B cell (primary cell): ENCODE measurements at regions of chr1 and their contacts with region 1.

Region 1: GRCh38 chr1:248807067-248807737 is 18.5 kb downstream of the SH3BP5L start:
- DNase-seq: peak; percentile 77
- ATAC-seq: peak; percentile 56
- H3K4me3 ChIP-seq: no peak overlapping the region
- H3K4me3 Mint-ChIP-seq: peak overlapping the region; percentile 57
- H3K27ac ChIP-seq: no peak overlapping the region
- H3K27ac Mint-ChIP-seq: peak overlapping the region; percentile 99
- H3K4me1 ChIP-seq: peaks cover 47 to 54% of the 10 kb centered on the region in 2 donors
- H3K4me1 Mint-ChIP-seq: peaks cover 46% of the 10 kb centered on the region
- H3K27me3 ChIP-seq: no peaks in the 10 kb centered on the region
- H3K27me3 Mint-ChIP-seq: no peaks in the 10 kb centered on the region
- CTCF ChIP-seq: peak; percentile 92

Region 2: GRCh38 chr1:248404024-248404423 is 403.2 kb before region 1 on chr1:
- CTCF ChIA-PET with region 1: interaction called, 12 read pairs
- POLR2A ChIA-PET with region 1: no interaction called
- intact Hi-C with region 1: loop called (anchors 1 kb)
- DNase-seq: peak; percentile 71
- ATAC-seq: no peak
- H3K4me3 ChIP-seq: no peak overlapping the region
- H3K4me3 Mint-ChIP-seq: no peak overlapping the region
- H3K27ac ChIP-seq: no peak overlapping the region
- H3K27ac Mint-ChIP-seq: no peak overlapping the region
- H3K4me1 ChIP-seq: no peaks in the 10 kb centered on the region
- H3K4me1 Mint-ChIP-seq: no peaks in the 10 kb centered on the region
- H3K27me3 ChIP-seq: no peaks in the 10 kb centered on the region
- H3K27me3 Mint-ChIP-seq: no peaks in the 10 kb centered on the region
- CTCF ChIP-seq: peak; percentile 18

Region 3: DNA sequence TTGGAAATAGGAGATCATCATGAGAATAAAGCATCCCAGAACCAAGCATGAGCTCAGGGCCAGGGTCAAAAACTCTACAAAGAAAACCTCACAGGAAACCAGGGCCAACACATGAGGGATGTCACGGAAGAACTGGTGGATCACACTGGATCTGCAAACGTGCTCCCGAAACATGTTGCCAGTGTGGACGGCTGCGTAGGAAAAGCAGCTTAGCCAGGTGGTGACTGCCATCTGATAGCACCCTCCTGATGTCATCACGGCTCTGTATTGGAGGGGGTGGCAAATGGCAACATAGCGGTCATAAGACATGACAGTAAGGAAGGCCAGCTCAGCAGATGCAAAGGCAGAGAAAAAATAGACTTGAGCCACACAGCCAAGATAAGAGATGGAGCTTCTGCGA is 125.6 kb before region 1 on chr1:
- CTCF ChIA-PET with region 1: interaction called, 274 read pairs
- POLR2A ChIA-PET with region 1: interaction called, 3 read pairs
- intact Hi-C with region 1: no loop called
- DNase-seq: no peak
- ATAC-seq: no peak
- H3K4me3 ChIP-seq: no peak overlapping the region
- H3K4me3 Mint-ChIP-seq: no peak overlapping the region
- H3K27ac ChIP-seq: no peak overlapping the region
- H3K27ac Mint-ChIP-seq: no peak overlapping the region
- H3K4me1 ChIP-seq: peaks cover 0 to 2% of the 10 kb centered on the region in 2 donors
- H3K4me1 Mint-ChIP-seq: peaks cover under 1% of the 10 kb centered on the region
- H3K27me3 ChIP-seq: peaks cover 0 to 6% (median 0%) of the 10 kb centered on the region in 4 experiments
- H3K27me3 Mint-ChIP-seq: peaks cover 12% of the 10 kb centered on the region
- CTCF ChIP-seq: no peak

Region 4: GRCh38 chr1:248703674-248704073 is 103.5 kb before region 1 on chr1:
- CTCF ChIA-PET with region 1: interaction called, 274 read pairs
- POLR2A ChIA-PET with region 1: no interaction called
- intact Hi-C with region 1: loop called (anchors 1 kb)
- DNase-seq: peak; percentile 43
- ATAC-seq: no peak
- H3K4me3 ChIP-seq: no peak overlapping the region
- H3K4me3 Mint-ChIP-seq: no peak overlapping the region
- H3K27ac ChIP-seq: no peak overlapping the region
- H3K27ac Mint-ChIP-seq: no peak overlapping the region
- H3K4me1 ChIP-seq: peaks cover 0 to 5% of the 10 kb centered on the region in 2 donors
- H3K4me1 Mint-ChIP-seq: peaks cover 4% of the 10 kb centered on the region
- H3K27me3 ChIP-seq: no peaks in the 10 kb centered on the region
- H3K27me3 Mint-ChIP-seq: no peaks in the 10 kb centered on the region
- CTCF ChIP-seq: peak; percentile 59

Region 5: GRCh38 chr1:248793592-248793991 is 13.6 kb before region 1 on chr1:
- CTCF ChIA-PET with region 1: interaction called, 74 read pairs
- POLR2A ChIA-PET with region 1: interaction called, 13 read pairs
- intact Hi-C with region 1: loop called (anchors 1 kb)
- DNase-seq: no peak
- ATAC-seq: no peak
- H3K4me3 ChIP-seq: no peak overlapping the region
- H3K4me3 Mint-ChIP-seq: no peak overlapping the region
- H3K27ac ChIP-seq: peak overlapping the region; percentile 85 to 90
- H3K27ac Mint-ChIP-seq: peak overlapping the region; percentile 97
- H3K4me1 ChIP-seq: peaks cover 48 to 55% of the 10 kb centered on the region in 2 donors
- H3K4me1 Mint-ChIP-seq: peaks cover 54% of the 10 kb centered on the region
- H3K27me3 ChIP-seq: no peaks in the 10 kb centered on the region
- H3K27me3 Mint-ChIP-seq: no peaks in the 10 kb centered on the region
- CTCF ChIP-seq: no peak

Region 6: GRCh38 chr1:248837794-248838356 is 30.7 kb after region 1 on chr1 and contains the start of gene ZNF672:
- CTCF ChIA-PET with region 1: interaction called, 15 read pairs
- POLR2A ChIA-PET with region 1: interaction called, 4 read pairs
- intact Hi-C with region 1: no loop called
- DNase-seq: peak; percentile 94
- ATAC-seq: peak; percentile 82
- H3K4me3 ChIP-seq: peak within 1 kb of the TSS; percentile 65 to 94 (median 92)
- H3K4me3 Mint-ChIP-seq: no peak within 1 kb of the TSS
- H3K27ac ChIP-seq: peak within 1 kb of the TSS; percentile 97 to 99
- H3K27ac Mint-ChIP-seq: no peak within 1 kb of the TSS
- H3K4me1 ChIP-seq: peaks cover 42 to 47% of the 10 kb centered on the region in 2 donors
- H3K4me1 Mint-ChIP-seq: peaks cover 36% of the 10 kb centered on the region
- H3K27me3 ChIP-seq: no peaks in the 10 kb centered on the region
- H3K27me3 Mint-ChIP-seq: no peaks in the 10 kb centered on the region
- CTCF ChIP-seq: no peak
- total RNA-seq, gene ZNF672: 56.3 and 62.2 TPM in 2 replicates